AG04450 (cell line): ENCODE measurements at regions of chr12 and their contacts with region 1.

Region 1: GRCh38 chr12:109110988-109111495 is 5.3 kb upstream of the ACACB start:
- DNase-seq: no peak
- H3K4me3 ChIP-seq: peak overlapping the region; percentile 71
- H3K27ac ChIP-seq: peak overlapping the region; percentile 81
- H3K27me3 ChIP-seq: no peaks in the 10 kb centered on the region
- CTCF ChIP-seq: no peak

Region 2: GRCh38 chr12:109047081-109047805 is 63.8 kb before region 1 on chr12:
- CTCF ChIA-PET with region 1: no interaction called
- POLR2A ChIA-PET with region 1: no interaction called
- DNase-seq: no peak
- H3K4me3 ChIP-seq: no peak overlapping the region
- H3K27ac ChIP-seq: no peak overlapping the region
- H3K27me3 ChIP-seq: no peaks in the 10 kb centered on the region
- CTCF ChIP-seq: no peak

Region 3: GRCh38 chr12:109093022-109093918 is 17.8 kb before region 1 on chr12 and contains the start of gene ALKBH2:
- CTCF ChIA-PET with region 1: interaction called, 57 read pairs
- POLR2A ChIA-PET with region 1: no interaction called
- DNase-seq: peak; percentile 72
- H3K4me3 ChIP-seq: peak within 1 kb of the TSS; percentile 75
- H3K27ac ChIP-seq: peak within 1 kb of the TSS; percentile 65
- H3K27me3 ChIP-seq: no peaks in the 10 kb centered on the region
- CTCF ChIP-seq: peak; percentile 99
- polyA plus RNA-seq, gene ALKBH2: 13.2 and 14.6 TPM in 2 replicates

Region 4: GRCh38 chr12:109126784-109127183 is 15.7 kb after region 1 on chr12:
- CTCF ChIA-PET with region 1: interaction called, 25 read pairs
- POLR2A ChIA-PET with region 1: no interaction called
- DNase-seq: no peak
- H3K4me3 ChIP-seq: no peak overlapping the region
- H3K27ac ChIP-seq: no peak overlapping the region
- H3K27me3 ChIP-seq: peaks cover 2% of the 10 kb centered on the region
- CTCF ChIP-seq: no peak

Region 5: DNA sequence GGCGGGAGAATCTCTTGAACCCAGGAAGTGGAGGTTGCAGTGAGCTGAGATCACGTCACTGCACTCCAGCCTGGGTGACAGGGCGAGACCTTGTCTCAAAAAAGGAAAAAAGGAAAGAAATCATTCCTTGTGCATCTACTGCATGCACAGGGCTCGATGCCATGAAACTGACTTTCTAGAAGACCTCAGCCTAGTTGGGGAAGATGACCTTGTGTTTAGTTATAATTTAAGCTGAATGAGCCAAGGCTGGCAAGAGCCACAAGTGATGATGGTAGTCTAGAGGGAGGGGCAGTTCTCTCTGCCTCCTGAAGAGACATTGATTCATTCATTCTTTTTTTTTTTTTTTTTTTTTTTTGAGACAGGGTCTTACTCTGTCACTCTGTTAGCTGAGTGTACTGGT is 29.5 kb after region 1 on chr12:
- CTCF ChIA-PET with region 1: interaction called, 20 read pairs
- POLR2A ChIA-PET with region 1: interaction called, 12 read pairs
- DNase-seq: no peak
- H3K4me3 ChIP-seq: no peak overlapping the region
- H3K27ac ChIP-seq: no peak overlapping the region
- H3K27me3 ChIP-seq: peaks cover 5% of the 10 kb centered on the region
- CTCF ChIP-seq: no peak

Region 6: GRCh38 chr12:109154451-109155438 is 43.7 kb after region 1 on chr12:
- CTCF ChIA-PET with region 1: interaction called, 14 read pairs
- POLR2A ChIA-PET with region 1: no interaction called
- DNase-seq: peak; percentile 27
- H3K4me3 ChIP-seq: peak overlapping the region; percentile 71
- H3K27ac ChIP-seq: no peak overlapping the region
- H3K27me3 ChIP-seq: peaks cover 12% of the 10 kb centered on the region
- CTCF ChIP-seq: no peak

Region 7: DNA sequence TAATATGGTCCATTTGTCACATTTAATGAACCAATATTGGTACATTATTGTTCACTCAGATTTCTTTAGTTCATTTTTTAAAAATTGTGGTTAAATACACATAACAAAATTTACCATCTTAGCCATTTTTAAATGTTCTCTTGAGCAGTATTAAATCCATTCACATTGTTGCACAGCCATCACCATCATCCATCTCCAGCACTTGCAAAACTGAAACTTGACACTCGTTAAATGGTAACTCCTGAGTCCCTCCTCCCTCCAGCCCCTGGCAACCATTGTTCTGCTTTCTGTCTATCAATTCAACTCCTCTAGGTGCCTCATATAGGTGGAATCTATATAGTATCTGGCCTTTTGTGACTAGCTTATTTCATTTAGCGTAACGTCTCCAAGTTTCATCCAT is 91.7 kb after region 1 on chr12:
- CTCF ChIA-PET with region 1: no interaction called
- POLR2A ChIA-PET with region 1: no interaction called
- DNase-seq: no peak
- H3K4me3 ChIP-seq: no peak overlapping the region
- H3K27ac ChIP-seq: no peak overlapping the region
- H3K27me3 ChIP-seq: no peaks in the 10 kb centered on the region
- CTCF ChIP-seq: no peak

Region 8: DNA sequence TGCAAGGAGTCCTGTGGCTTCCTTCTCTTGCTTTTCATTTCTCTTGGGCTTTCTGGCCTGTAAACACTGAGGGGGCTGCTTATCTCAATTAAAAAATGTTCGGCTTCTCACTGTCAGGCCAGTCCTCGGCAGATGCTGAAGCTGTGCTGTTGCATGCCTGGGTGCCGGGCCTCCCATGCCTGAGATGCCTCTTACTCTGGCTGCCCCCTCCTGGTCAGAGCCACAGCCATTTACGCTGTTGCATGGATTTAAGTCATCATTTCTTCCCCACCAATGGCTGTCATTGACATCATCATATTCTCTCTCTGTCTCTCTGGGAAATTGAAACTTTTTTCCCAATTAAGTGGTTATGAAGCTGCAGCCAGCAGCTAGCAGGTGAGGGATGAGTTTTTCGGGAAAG is 144.3 kb after region 1 on chr12:
- CTCF ChIA-PET with region 1: interaction called, 16 read pairs
- POLR2A ChIA-PET with region 1: no interaction called
- DNase-seq: no peak
- H3K4me3 ChIP-seq: no peak overlapping the region
- H3K27ac ChIP-seq: no peak overlapping the region
- H3K27me3 ChIP-seq: no peaks in the 10 kb centered on the region
- CTCF ChIP-seq: peak; percentile 43

Region 9: GRCh38 chr12:109393437-109394345 is 282.6 kb after region 1 on chr12:
- CTCF ChIA-PET with region 1: interaction called, 38 read pairs
- POLR2A ChIA-PET with region 1: no interaction called
- DNase-seq: peak; percentile 16
- H3K4me3 ChIP-seq: no peak overlapping the region
- H3K27ac ChIP-seq: no peak overlapping the region
- H3K27me3 ChIP-seq: peaks cover 2% of the 10 kb centered on the region
- CTCF ChIP-seq: peak; percentile 97